Activated CD8-positive, alpha-beta T cell treated with anti-CD3 and anti-CD28 coated beads, Interleukin-2, amount 10 ng/mL, durations not matched to agents 7 days and 5 days (primary cell): ENCODE measurements at regions of chr14 and their contacts with region 1.

Region 1: GRCh38 chr14:106390401-106390800 is 864.0 kb downstream of the TMEM121 start:
- DNase-seq: no peak
- ATAC-seq: no peak
- H3K4me3 Mint-ChIP-seq: no peak overlapping the region
- H3K27ac Mint-ChIP-seq: no peak overlapping the region
- H3K4me1 Mint-ChIP-seq: peaks cover 19% of the 10 kb centered on the region
- H3K27me3 Mint-ChIP-seq: peaks cover 16% of the 10 kb centered on the region

Region 2: DNA sequence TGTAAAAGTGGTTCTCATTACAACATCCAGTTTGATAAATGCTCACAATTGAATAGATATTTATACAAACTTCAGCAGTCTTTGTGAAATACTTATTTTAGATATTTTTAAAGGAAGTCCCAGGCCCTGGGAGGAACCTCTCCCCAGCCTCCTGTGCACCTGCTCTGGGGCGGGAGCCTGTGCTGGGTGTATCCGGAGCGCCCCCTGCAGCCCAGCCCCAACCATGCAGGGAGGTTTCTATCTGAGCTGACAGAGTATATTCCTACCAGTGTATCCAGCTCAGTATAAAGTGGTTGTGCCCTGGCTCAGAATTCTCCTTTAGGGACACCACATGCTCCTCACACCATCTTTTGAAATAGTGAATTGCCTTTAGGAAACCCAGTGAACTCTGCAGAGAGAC is 12.2 kb before region 1 on chr14:
- CTCF ChIA-PET with region 1: interaction called, 10 read pairs
- POLR2A ChIA-PET with region 1: no interaction called
- DNase-seq: peak; percentile 59
- ATAC-seq: peak; percentile 56
- H3K4me3 Mint-ChIP-seq: no peak overlapping the region
- H3K27ac Mint-ChIP-seq: no peak overlapping the region
- H3K4me1 Mint-ChIP-seq: peaks cover 21% of the 10 kb centered on the region
- H3K27me3 Mint-ChIP-seq: peaks cover 17% of the 10 kb centered on the region

Region 3: GRCh38 chr14:106455026-106455425 is 64.6 kb after region 1 on chr14:
- CTCF ChIA-PET with region 1: no interaction called
- POLR2A ChIA-PET with region 1: no interaction called
- DNase-seq: no peak
- ATAC-seq: no peak
- H3K4me3 Mint-ChIP-seq: no peak overlapping the region
- H3K27ac Mint-ChIP-seq: no peak overlapping the region
- H3K4me1 Mint-ChIP-seq: no peaks in the 10 kb centered on the region
- H3K27me3 Mint-ChIP-seq: no peaks in the 10 kb centered on the region